Ascending aorta (tissue), 2 donors: ENCODE measurements at regions of chr12 and their contacts with region 1.

Region 1: DNA sequence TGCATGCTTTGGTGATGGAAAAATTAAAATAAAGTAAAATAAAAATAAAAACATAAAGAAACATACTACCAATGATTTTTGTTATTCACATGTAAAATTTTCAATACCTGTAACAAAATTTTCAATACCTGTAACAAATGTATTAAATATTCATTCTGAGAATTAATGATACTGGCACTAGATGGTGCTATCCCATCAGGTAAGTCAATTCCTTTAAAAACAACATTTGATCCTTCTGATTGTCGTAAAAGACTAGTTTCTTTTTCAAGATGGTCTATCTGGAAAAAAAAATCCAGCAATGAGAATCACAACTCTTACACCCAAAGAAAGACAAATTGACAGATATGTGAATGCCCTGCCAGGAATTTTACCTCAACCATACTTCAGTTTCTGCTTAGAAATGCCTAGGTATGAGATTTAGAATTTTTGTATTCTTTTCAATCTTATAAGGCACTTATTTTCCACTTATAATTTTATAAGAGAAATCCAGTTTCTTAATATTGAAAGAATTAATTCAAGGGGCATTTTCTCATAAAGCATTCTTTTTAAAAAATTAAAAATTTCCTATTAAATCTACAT is 30.7 kb downstream of the CEP290 start:
- DNase-seq: no peak
- H3K4me3 ChIP-seq: peak overlapping the region in 1 of 2 donors; percentile 21
- H3K27ac ChIP-seq: no peak overlapping the region
- H3K4me1 ChIP-seq: no peaks in the 10 kb centered on the region
- H3K27me3 ChIP-seq: no peaks in the 10 kb centered on the region
- CTCF ChIP-seq: peak in 1 of 3 experiments; percentile 35

Region 2: DNA sequence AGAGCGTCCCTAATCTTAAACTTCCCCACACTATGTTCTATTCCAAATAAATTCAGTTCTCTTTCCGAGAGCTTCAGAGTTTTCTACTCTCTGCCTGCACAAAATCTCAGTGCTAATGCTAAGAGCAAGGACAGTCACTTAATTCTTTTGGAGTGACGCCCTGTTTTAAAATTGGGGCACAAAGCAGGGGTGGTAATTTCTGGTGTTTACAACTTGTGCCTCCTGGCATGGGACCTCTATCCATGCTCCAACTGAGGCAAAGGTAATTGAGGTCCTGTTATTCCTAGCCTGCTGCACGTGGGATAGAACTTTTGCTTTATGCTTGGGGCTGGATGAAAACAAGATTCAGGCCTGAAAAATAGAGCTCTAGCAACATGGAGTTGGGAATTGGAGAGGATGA is 104.8 kb before region 1 on chr12:
- intact Hi-C with region 1: no loop called
- DNase-seq: no peak
- H3K4me3 ChIP-seq: no peak overlapping the region
- H3K27ac ChIP-seq: no peak overlapping the region
- H3K4me1 ChIP-seq: no peaks in the 10 kb centered on the region
- H3K27me3 ChIP-seq: no peaks in the 10 kb centered on the region
- CTCF ChIP-seq: no peak

Region 3: GRCh38 chr12:88993651-88994050 is 882.5 kb after region 1 on chr12:
- intact Hi-C with region 1: loop called (anchors 5 kb)
- DNase-seq: no peak
- H3K4me3 ChIP-seq: no peak overlapping the region
- H3K27ac ChIP-seq: no peak overlapping the region
- H3K4me1 ChIP-seq: no peaks in the 10 kb centered on the region
- H3K27me3 ChIP-seq: no peaks in the 10 kb centered on the region
- CTCF ChIP-seq: peak in 2 of 3 experiments; percentile 23 to 50